Heart left ventricle (tissue), 16 donors: ENCODE measurements at regions of chr20 and their contacts with region 1.

Region 1: DNA sequence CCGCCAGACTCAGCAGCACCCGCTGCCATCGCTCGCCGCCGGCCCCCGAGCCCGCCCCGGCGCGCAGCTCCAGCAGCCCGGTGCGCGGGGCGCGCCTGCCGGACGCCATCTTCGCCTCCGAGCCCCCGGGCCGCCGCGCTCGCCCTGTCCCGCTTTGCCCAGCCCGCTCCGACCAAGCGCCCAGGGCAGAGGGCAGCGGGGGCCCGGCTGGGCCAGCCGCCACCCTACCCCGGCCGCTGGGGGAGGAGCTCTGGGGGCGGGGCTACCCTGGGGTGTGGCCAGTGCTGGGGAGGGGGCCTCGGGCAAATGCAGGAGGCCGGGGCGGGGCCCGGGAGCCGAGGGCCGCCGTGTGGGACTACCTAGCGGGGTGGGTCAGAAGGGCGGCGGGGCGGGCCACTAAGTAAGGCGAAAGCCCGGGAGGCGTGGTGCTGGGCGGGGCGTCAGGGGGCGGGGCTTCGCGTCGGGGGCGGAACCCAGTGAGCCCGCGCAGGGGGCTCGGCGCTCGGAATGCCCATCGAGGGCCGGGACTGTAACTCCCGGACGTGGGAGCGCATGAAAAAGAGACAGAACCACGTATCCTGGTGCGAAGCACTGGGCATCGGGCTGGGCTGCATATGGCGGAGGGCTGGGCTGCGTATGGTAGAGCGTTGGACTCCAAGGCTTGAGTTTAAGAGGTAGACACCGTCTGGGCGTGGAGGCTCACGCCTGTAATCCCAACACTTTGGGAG is at the start of gene SNTA1:
- DNase-seq: peak; percentile 93 to 97 (median 96)
- ATAC-seq: peak; percentile 81 to 93 (median 92)
- H3K4me3 ChIP-seq: peak within 1 kb of the TSS; percentile 56 to 93 (median 70)
- H3K27ac ChIP-seq: peak within 1 kb of the TSS; percentile 67 to 92 (median 86)
- H3K4me1 ChIP-seq: peaks cover 2 to 47% (median 14%) of the 10 kb centered on the region in 12 donors
- H3K27me3 ChIP-seq: no peaks in the 10 kb centered on the region
- CTCF ChIP-seq: no peak
- POLR2A ChIP-seq: peak; percentile 64 to 66
- total RNA-seq, gene SNTA1: 122 to 318 (median 166) TPM

Region 2: GRCh38 chr20:33158637-33159385 is 284.9 kb before region 1 on chr20:
- intact Hi-C with region 1: no loop called
- DNase-seq: no peak
- ATAC-seq: no peak
- H3K4me3 ChIP-seq: no peak overlapping the region
- H3K27ac ChIP-seq: no peak overlapping the region
- H3K4me1 ChIP-seq: no peaks in the 10 kb centered on the region
- H3K27me3 ChIP-seq: peaks cover 0 to 28% (median 0%) of the 10 kb centered on the region in 9 donors
- CTCF ChIP-seq: no peak
- POLR2A ChIP-seq: no peak

Region 3: GRCh38 chr20:33401184-33401920 is 42.3 kb before region 1 on chr20 and contains the start of gene CDK5RAP1:
- intact Hi-C with region 1: loop called in 2 of 10 experiments (anchors 5 kb)
- DNase-seq: peak; percentile 86 to 91 (median 87)
- ATAC-seq: peak; percentile 74 to 97 (median 94)
- H3K4me3 ChIP-seq: peak within 1 kb of the TSS; percentile 70 to 100 (median 91)
- H3K27ac ChIP-seq: peak within 1 kb of the TSS; percentile 55 to 86 (median 74)
- H3K4me1 ChIP-seq: peaks cover 0 to 30% (median 16%) of the 10 kb centered on the region in 12 donors
- H3K27me3 ChIP-seq: no peaks in the 10 kb centered on the region
- CTCF ChIP-seq: peak in 1 of 12 donors; percentile 3
- POLR2A ChIP-seq: peak in 1 of 2 donors; percentile 42
- total RNA-seq, gene CDK5RAP1: 17.6 to 24.3 (median 20.1) TPM

Region 4: DNA sequence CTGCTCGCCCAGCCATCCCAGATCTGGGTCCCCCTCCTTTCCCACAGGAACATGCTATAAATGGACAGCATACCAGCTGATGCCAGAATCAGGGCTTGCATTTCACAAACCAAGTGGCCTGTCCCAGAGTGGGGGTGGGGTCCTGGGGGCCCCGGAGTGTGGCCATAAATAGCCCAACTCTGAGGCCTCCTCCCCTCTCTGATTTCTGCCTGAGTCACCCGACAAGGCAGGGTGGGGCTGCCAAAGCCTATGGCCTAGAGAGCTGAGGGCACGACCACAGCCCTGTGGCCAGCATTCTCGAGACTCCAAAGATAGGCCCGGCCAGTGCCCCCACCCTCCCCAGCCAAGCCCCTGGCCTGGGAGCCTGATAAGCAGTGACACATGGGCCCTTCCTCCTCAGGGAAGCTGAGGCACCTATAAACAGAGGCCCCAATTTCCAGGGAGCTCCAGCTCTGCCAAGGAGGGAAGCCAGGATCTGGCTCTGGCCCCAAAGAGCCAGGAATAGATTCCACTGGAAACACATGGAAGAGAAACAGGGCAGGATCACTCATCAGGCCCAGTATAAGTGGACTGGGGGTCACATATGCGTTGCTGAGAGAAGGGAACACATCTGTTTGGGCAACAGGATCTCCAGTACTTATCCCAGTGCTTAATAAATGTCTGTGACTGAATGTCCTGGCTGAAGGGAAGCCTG is 20.4 kb before region 1 on chr20:
- intact Hi-C with region 1: loop called in 6 of 10 experiments (anchors 1 to 2 kb)
- DNase-seq: peak; percentile 80 to 92 (median 86)
- ATAC-seq: peak; percentile 83 to 88 (median 86)
- H3K4me3 ChIP-seq: no peak overlapping the region
- H3K27ac ChIP-seq: peak overlapping the region; percentile 81 to 96 (median 87)
- H3K4me1 ChIP-seq: peaks cover 0 to 87% (median 47%) of the 10 kb centered on the region in 12 donors
- H3K27me3 ChIP-seq: no peaks in the 10 kb centered on the region
- CTCF ChIP-seq: no peak
- POLR2A ChIP-seq: no peak